Natural killer cell (primary cell): ENCODE measurements at regions of chr6 and their contacts with region 1.

Region 1: GRCh38 chr6:151323791-151324487 is 67.4 kb downstream of the ZBTB2 start:
- DNase-seq: peak; percentile 69 to 83
- ATAC-seq: peak; percentile 84 to 90 (median 88)
- H3K4me3 ChIP-seq: no peak overlapping the region
- H3K4me3 Mint-ChIP-seq: no peak overlapping the region
- H3K27ac ChIP-seq: no peak overlapping the region
- H3K27ac Mint-ChIP-seq: no peak overlapping the region
- H3K4me1 ChIP-seq: peaks cover 17% of the 10 kb centered on the region
- H3K4me1 Mint-ChIP-seq: peaks cover 23 to 27% of the 10 kb centered on the region in 2 donors
- H3K27me3 ChIP-seq: peaks cover 23% of the 10 kb centered on the region
- H3K27me3 Mint-ChIP-seq: peaks cover 42 to 43% of the 10 kb centered on the region in 2 donors
- CTCF ChIP-seq: peak; percentile 98

Region 2: GRCh38 chr6:150891888-150892485 is 432.0 kb before region 1 on chr6:
- intact Hi-C with region 1: loop called (anchors 1 kb)
- DNase-seq: peak; percentile 21 to 76
- ATAC-seq: peak; percentile 58 to 70 (median 61)
- H3K4me3 ChIP-seq: no peak overlapping the region
- H3K4me3 Mint-ChIP-seq: no peak overlapping the region
- H3K27ac ChIP-seq: no peak overlapping the region
- H3K27ac Mint-ChIP-seq: no peak overlapping the region
- H3K4me1 ChIP-seq: peaks cover 10% of the 10 kb centered on the region
- H3K4me1 Mint-ChIP-seq: peaks cover 20 to 23% of the 10 kb centered on the region in 2 donors
- H3K27me3 ChIP-seq: no peaks in the 10 kb centered on the region
- H3K27me3 Mint-ChIP-seq: no peaks in the 10 kb centered on the region
- CTCF ChIP-seq: peak; percentile 87

Region 3: DNA sequence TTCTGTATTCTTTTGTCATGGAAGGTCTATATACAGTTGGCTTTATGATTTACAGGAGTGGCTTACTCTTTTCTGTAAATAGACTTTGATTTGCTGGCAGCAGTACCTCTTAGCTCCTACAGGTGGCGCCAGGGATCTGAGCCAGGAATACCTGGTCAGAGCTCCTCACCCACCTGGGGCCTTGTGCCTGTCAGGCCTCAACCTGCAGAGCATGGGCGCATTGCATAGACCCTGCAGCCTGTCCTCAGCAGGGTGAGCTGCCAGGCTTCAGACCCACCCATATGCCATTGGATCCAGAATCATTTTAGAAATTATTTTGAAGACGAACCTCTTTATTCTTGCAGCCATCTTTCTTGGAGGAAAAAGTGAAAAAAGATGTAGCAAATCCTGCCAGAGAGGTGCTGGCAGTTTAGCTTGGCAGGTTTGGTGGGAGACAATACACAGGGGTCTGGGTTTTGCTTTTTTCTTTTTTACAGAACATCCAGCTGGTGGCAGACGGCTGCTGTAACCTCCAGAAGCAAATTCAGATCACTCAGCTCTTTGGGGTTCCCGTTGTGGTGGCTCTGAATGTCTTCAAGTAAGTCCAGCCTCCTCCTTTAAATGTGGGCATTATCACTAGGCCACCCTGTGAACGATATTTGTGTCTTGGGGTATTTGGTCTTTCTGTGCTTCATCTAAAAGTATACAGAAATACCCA is 309.4 kb before region 1 on chr6:
- intact Hi-C with region 1: loop called (anchors 1 kb)
- DNase-seq: peak; percentile 39 to 81
- ATAC-seq: peak; percentile 79 to 84 (median 79)
- H3K4me3 ChIP-seq: no peak overlapping the region
- H3K4me3 Mint-ChIP-seq: no peak overlapping the region
- H3K27ac ChIP-seq: no peak overlapping the region
- H3K27ac Mint-ChIP-seq: peak overlapping the region in 1 of 2 donors; percentile 24
- H3K4me1 ChIP-seq: no peaks in the 10 kb centered on the region
- H3K4me1 Mint-ChIP-seq: peaks cover 0 to 4% of the 10 kb centered on the region in 2 donors
- H3K27me3 ChIP-seq: no peaks in the 10 kb centered on the region
- H3K27me3 Mint-ChIP-seq: no peaks in the 10 kb centered on the region
- CTCF ChIP-seq: peak; percentile 97